OCI-LY7 (cell line): ENCODE measurements at regions of chr2 and their contacts with region 1.

Region 1: GRCh38 chr2:25521665-25522387 is 151.6 kb downstream of the DTNB start:
- DNase-seq: peak; percentile 89
- H3K4me3 ChIP-seq: peak overlapping the region; percentile 42
- H3K27ac ChIP-seq: peak overlapping the region; percentile 56
- H3K4me1 ChIP-seq: peaks cover 38% of the 10 kb centered on the region
- CTCF ChIP-seq: peak; percentile 99

Region 2: DNA sequence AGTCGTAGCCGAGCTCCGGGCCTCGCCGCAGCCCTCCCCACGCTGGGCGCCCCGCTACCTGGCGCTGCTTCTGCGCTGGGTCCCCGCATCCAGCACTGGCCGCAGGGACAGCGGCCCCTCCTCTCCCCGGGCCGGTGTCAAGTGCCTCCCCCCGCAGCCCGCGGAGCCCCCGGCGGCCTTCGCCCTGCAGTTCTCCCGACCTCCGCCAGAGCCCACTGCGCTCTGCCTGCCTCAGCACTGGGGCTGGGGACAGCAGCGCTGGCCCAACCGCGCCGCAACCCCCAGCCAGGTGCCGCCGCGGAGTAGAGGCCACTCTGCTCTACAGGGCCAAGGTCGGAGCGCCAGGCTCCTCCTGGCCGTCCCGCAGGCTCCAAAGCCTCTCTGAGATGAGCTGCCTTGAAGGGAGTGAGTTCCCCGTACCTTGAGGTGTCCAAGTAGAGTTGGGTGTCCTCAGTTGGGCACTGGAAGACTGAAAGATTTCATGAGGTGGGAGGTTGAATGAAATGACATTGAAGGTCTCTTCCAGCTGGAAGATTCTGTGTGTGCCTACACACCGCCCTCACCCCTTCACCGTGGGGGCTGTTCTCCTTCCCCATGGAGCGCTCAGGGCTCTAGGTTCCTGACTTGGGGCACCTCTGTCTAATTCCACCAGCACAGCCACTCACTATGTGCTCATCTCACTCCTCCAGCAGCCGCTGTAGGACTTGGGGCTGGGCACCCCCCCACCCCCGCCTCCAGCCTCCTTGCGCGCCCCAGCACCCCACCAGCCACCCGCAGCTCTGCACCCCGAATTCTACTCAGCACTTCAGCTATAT is 179.2 kb before region 1 on chr2:
- CTCF ChIA-PET with region 1: no interaction called
- POLR2A ChIA-PET with region 1: interaction called, 3 read pairs
- intact Hi-C with region 1: loop called (anchors 1 kb)
- DNase-seq: peak; percentile 84
- H3K4me3 ChIP-seq: peak overlapping the region; percentile 75
- H3K27ac ChIP-seq: no peak overlapping the region
- H3K4me1 ChIP-seq: peaks cover 11% of the 10 kb centered on the region
- CTCF ChIP-seq: peak; percentile 84

Region 3: GRCh38 chr2:25376750-25377621 is 144.8 kb before region 1 on chr2:
- CTCF ChIA-PET with region 1: no interaction called
- POLR2A ChIA-PET with region 1: interaction called, 7 read pairs
- intact Hi-C with region 1: loop called (anchors 1 kb)
- DNase-seq: peak; percentile 98
- H3K4me3 ChIP-seq: peak overlapping the region; percentile 31
- H3K27ac ChIP-seq: peak overlapping the region; percentile 82
- H3K4me1 ChIP-seq: peaks cover 61% of the 10 kb centered on the region
- CTCF ChIP-seq: peak; percentile 97

Region 4: GRCh38 chr2:25420820-25421237 is 101.0 kb before region 1 on chr2:
- CTCF ChIA-PET with region 1: interaction called, 4 read pairs
- POLR2A ChIA-PET with region 1: interaction called, 4 read pairs
- intact Hi-C with region 1: loop called (anchors 1 kb)
- DNase-seq: peak; percentile 71
- H3K4me3 ChIP-seq: peak overlapping the region; percentile 65
- H3K27ac ChIP-seq: peak overlapping the region; percentile 99
- H3K4me1 ChIP-seq: peaks cover 83% of the 10 kb centered on the region
- CTCF ChIP-seq: no peak

Region 5: DNA sequence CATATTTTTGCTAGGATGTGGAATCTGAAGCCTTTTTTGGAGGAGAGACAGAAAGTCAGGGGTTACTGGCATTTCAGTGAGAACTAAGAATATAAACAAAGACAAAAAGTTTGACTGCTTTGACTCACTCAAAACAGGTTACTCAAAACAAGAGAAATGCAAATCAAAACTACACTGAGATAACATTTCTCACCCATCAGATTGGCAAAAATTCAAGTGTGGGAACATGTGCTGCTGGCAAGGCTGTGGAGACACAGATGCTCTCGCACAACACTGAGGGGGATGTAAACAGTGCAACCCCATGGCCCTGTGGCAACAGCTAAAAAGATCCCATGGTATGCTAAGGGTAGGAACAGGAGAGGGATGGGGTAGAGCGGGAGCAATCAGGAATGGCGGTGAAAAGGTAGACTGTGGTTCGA is 64.9 kb after region 1 on chr2:
- CTCF ChIA-PET with region 1: no interaction called
- POLR2A ChIA-PET with region 1: no interaction called
- intact Hi-C with region 1: no loop called
- DNase-seq: no peak
- H3K4me3 ChIP-seq: no peak overlapping the region
- H3K27ac ChIP-seq: no peak overlapping the region
- H3K4me1 ChIP-seq: peaks cover 19% of the 10 kb centered on the region
- CTCF ChIP-seq: no peak